MCF 10A (cell line): ENCODE measurements at regions of chr3 and their contacts with region 1.

Region 1: GRCh38 chr3:64011685-64012084 is 11.6 kb downstream of the PSMD6 start:
- DNase-seq: peak; percentile 44
- H3K4me3 Mint-ChIP-seq: no peak overlapping the region
- H3K27ac Mint-ChIP-seq: no peak overlapping the region
- H3K4me1 Mint-ChIP-seq: peaks cover 18% of the 10 kb centered on the region
- H3K27me3 Mint-ChIP-seq: no peaks in the 10 kb centered on the region
- CTCF ChIP-seq: no peak

Region 2: GRCh38 chr3:63824309-63824708 is 187.4 kb before region 1 on chr3:
- CTCF ChIA-PET with region 1: no interaction called
- POLR2A ChIA-PET with region 1: no interaction called
- intact Hi-C with region 1: no loop called
- DNase-seq: peak; percentile 69
- H3K4me3 Mint-ChIP-seq: no peak overlapping the region
- H3K27ac Mint-ChIP-seq: peak overlapping the region; percentile 83
- H3K4me1 Mint-ChIP-seq: peaks cover 12% of the 10 kb centered on the region
- H3K27me3 Mint-ChIP-seq: no peaks in the 10 kb centered on the region
- CTCF ChIP-seq: no peak

Region 3: DNA sequence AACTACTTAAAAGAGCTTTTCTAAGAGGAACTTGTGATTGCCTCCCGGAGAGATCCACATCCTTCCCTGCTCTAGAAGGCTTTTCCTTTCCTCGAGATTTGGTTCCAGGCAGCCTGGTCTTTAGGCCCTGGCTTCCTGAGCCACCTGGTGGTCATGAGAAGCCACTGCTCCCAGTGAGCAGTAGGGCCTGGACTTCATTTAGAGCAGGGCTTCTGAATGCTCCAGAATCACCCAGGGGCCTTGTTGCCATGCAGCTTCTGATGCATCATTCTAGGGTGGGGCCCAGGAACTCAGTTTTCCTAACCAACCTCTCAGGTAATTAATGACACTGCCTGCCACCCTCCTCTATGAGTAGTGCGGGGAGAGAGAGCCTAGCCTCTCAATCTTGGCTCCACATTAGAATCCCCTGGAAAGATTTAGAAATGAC is 18.0 kb before region 1 on chr3:
- CTCF ChIA-PET with region 1: interaction called, 57 read pairs
- POLR2A ChIA-PET with region 1: interaction called, 6 read pairs
- intact Hi-C with region 1: no loop called
- DNase-seq: peak; percentile 77
- H3K4me3 Mint-ChIP-seq: no peak overlapping the region
- H3K27ac Mint-ChIP-seq: peak overlapping the region; percentile 23
- H3K4me1 Mint-ChIP-seq: no peaks in the 10 kb centered on the region
- H3K27me3 Mint-ChIP-seq: no peaks in the 10 kb centered on the region
- CTCF ChIP-seq: peak; percentile 83

Region 4: DNA sequence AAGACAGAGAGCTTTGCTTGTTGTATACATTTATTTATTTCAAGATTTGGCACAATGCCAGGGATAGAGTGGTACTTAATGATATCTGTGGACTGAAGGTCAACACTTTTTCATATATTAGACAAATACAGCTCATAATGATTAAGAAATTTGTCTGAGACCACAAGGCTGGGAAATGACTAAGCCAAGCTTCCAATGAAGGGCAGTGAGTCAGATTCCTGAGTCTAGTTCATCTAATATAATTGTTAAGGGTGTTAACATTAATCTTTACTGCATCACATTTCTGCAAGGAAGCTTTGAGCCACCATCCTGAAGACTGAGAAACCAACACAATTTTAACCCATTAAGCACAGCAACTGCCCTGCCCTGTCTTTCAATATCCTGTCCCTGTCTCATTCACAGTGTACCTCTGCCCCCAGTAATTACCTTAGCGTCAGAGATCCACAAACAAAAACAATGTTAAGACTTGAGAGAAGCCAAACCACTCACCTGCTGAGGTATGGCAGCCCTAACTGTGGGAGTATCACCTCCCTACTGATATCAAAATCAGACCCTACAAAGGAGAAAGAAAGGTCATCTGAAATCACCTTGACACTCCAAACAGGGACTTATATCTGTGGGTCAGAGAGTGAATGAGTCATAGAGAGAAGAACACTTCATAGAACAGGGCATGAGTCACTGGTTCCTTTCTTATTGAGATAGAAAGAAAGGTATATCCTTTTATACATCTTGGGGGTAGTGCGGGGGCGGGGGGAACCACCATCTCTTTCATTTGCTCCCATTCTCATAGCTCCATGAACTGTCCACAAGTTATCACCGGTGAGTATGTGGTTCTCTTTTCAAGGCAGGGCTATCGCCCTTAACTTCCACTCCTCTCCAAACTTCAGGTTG is 1952.3 kb after region 1 on chr3:
- CTCF ChIA-PET with region 1: no interaction called
- POLR2A ChIA-PET with region 1: no interaction called
- intact Hi-C with region 1: no loop called
- DNase-seq: peak; percentile 88
- H3K4me3 Mint-ChIP-seq: no peak overlapping the region
- H3K27ac Mint-ChIP-seq: peak overlapping the region; percentile 37
- H3K4me1 Mint-ChIP-seq: peaks cover 23% of the 10 kb centered on the region
- H3K27me3 Mint-ChIP-seq: no peaks in the 10 kb centered on the region
- CTCF ChIP-seq: no peak